Dorsolateral prefrontal cortex (tissue), 120 donors: ENCODE measurements at regions of chrX and their contacts with region 1.

Region 1: DNA sequence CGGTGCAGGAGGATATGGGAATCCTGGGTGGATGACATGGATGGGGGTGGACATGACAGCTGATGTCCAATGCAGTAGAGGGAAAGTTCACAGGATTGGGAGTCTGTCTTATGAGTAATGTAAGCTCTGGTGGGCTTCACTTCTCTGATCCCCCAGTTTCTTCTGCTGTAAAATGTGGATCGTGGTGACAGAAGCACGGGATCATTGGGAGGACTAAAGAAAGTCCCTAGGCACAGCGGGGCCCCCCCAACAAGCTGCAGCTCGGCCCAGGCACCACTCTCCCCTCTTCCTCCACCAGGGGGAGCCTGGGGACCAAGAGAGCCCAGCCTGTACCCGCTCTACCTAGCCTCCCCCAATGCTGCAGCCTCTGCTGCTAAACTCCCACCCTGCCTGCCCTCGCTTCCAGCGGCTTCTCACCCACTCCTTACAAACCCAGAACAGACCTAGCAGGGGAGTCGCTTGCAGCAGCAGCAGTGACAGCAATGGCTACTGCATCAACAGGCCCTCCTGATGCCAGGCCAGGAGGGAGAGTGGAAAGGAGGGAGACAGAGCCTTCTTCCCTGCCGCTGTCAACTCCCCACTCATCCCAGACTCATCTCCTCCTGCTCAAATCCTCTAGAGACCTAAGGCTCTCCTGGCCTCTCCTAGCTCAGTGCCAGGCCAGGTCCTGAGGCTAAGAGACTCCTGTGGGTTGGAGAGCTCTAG is 36.1 kb upstream of the IQSEC2 start:
- DNase-seq: peak; percentile 64 to 87 (median 78)
- H3K4me3 ChIP-seq: peak overlapping the region in 53 of 59 donors; percentile 10 to 76 (median 65)
- H3K27ac ChIP-seq: peak overlapping the region in 9 of 59 donors; percentile 0 to 46 (median 12)
- H3K27me3 ChIP-seq: peaks cover 0 to 89% (median 32%) of the 10 kb centered on the region in 45 donors
- CTCF ChIP-seq: peak in 55 of 56 donors; percentile 55 to 90 (median 83)

Region 2: GRCh38 chrX:52811065-52811625 is 506.4 kb before region 1 on chrX and contains the start of gene XAGE5:
- intact Hi-C with region 1: no loop called
- DNase-seq: no peak
- H3K4me3 ChIP-seq: no peak within 1 kb of the TSS
- H3K27ac ChIP-seq: no peak within 1 kb of the TSS
- H3K27me3 ChIP-seq: peaks cover 0 to 86% (median 21%) of the 10 kb centered on the region in 45 donors
- CTCF ChIP-seq: no peak
- total RNA-seq, gene XAGE5: not detected

Region 3: DNA sequence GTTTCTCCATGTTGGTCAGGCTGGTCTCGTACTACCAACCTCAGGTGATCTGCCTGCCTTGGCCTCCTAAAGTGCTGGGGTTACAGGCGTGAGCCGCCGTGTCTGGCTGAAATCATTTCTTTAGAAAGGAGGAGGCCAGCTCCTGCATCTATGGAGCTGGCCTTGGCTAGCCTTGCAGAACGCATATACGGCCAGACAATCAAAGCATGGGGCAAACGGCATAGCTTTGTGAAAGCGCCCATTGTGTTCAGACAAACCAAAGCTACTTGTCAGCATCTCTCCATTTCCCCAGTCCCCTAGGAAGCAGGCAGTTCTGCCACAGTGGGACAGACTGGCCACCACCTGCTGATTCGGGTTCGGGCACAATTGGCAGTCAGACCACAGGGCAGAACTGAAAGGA is 12.8 kb after region 1 on chrX:
- intact Hi-C with region 1: loop called in 1 of 2 experiments (anchors 2 kb)
- DNase-seq: peak in 1 of 10 donors; percentile 42
- H3K4me3 ChIP-seq: peak overlapping the region in 5 of 59 donors; percentile 12 to 34 (median 21)
- H3K27ac ChIP-seq: peak overlapping the region in 1 of 59 donors; percentile 36
- H3K27me3 ChIP-seq: peaks cover 0 to 92% (median 48%) of the 10 kb centered on the region in 45 donors
- CTCF ChIP-seq: no peak